Mammary epithelial cell (primary cell): ENCODE measurements at regions of chr7 and their contacts with region 1.

Region 1: GRCh38 chr7:133853706-133854276 is 273.3 kb upstream of the LRGUK start:
- DNase-seq: peak; percentile 98
- H3K4me3 ChIP-seq: no peak overlapping the region
- H3K27ac ChIP-seq: peak overlapping the region; percentile 96
- H3K4me1 ChIP-seq: peaks cover 45% of the 10 kb centered on the region
- H3K27me3 ChIP-seq: no peaks in the 10 kb centered on the region
- CTCF ChIP-seq: peak; percentile 66 to 70

Region 2: GRCh38 chr7:133051066-133051465 is 802.7 kb before region 1 on chr7:
- CTCF ChIA-PET with region 1: no interaction called
- dilution Hi-C with region 1: no loop called
- in situ Hi-C with region 1: no loop called
- intact Hi-C with region 1: loop called (anchors 10 kb)
- DNase-seq: no peak
- H3K4me3 ChIP-seq: no peak overlapping the region
- H3K27ac ChIP-seq: no peak overlapping the region
- H3K4me1 ChIP-seq: peaks cover 35% of the 10 kb centered on the region
- H3K27me3 ChIP-seq: no peaks in the 10 kb centered on the region
- CTCF ChIP-seq: peak in 1 of 2 donors; percentile 28

Region 3: GRCh38 chr7:133434055-133434865 is 419.5 kb before region 1 on chr7:
- CTCF ChIA-PET with region 1: interaction called, 5 read pairs
- dilution Hi-C with region 1: no loop called
- in situ Hi-C with region 1: no loop called
- intact Hi-C with region 1: loop called (anchors 1 kb)
- DNase-seq: peak; percentile 8
- H3K4me3 ChIP-seq: no peak overlapping the region
- H3K27ac ChIP-seq: no peak overlapping the region
- H3K4me1 ChIP-seq: peaks cover 27% of the 10 kb centered on the region
- H3K27me3 ChIP-seq: no peaks in the 10 kb centered on the region
- CTCF ChIP-seq: peak; percentile 35 to 55

Region 4: DNA sequence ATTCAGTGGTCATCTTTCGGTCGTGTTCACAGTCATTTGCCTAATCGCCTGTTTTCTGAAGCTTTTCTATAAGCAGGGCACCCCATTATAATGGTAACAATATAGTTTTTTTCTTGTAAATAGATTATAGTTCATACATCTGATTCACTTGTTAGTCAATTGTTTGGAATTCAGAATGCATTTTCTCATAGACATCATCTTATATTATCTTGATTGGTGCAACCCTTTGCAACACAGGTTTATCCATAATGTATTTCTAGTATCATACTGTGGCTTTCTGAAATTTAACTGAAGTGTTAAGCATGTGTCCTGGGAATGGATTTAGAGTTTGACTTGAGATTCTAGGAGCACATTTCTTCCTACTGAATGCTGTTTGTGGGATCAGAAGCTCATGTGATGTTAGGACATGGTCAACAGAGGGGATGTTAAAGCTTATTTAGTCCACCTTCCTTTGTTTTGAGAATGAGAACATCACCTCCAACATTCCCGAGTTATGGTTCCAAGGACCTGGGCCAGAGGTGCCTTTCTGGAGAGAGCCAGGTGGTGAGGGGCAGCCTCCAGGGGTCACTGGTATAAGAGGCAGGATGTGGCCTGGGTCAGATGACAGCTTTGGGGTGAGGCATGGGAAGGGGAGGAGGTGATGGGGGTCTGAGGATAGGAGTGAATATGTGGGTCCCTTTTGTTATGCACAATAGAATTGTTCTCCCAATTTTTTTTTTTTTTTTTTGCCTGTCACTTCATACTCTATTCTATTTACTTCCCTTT is 185.3 kb before region 1 on chr7:
- CTCF ChIA-PET with region 1: no interaction called
- dilution Hi-C with region 1: no loop called
- in situ Hi-C with region 1: no loop called
- intact Hi-C with region 1: no loop called
- DNase-seq: no peak
- H3K4me3 ChIP-seq: no peak overlapping the region
- H3K27ac ChIP-seq: no peak overlapping the region
- H3K4me1 ChIP-seq: no peaks in the 10 kb centered on the region
- H3K27me3 ChIP-seq: no peaks in the 10 kb centered on the region
- CTCF ChIP-seq: no peak

Region 5: GRCh38 chr7:133703547-133703946 is 150.2 kb before region 1 on chr7:
- CTCF ChIA-PET with region 1: no interaction called
- dilution Hi-C with region 1: no loop called
- in situ Hi-C with region 1: no loop called
- intact Hi-C with region 1: loop called (anchors 1 kb)
- DNase-seq: peak; percentile 54
- H3K4me3 ChIP-seq: no peak overlapping the region
- H3K27ac ChIP-seq: no peak overlapping the region
- H3K4me1 ChIP-seq: peaks cover 25% of the 10 kb centered on the region
- H3K27me3 ChIP-seq: no peaks in the 10 kb centered on the region
- CTCF ChIP-seq: no peak

Region 6: GRCh38 chr7:133912916-133913697 is 59.3 kb after region 1 on chr7:
- CTCF ChIA-PET with region 1: no interaction called
- dilution Hi-C with region 1: no loop called
- in situ Hi-C with region 1: no loop called
- intact Hi-C with region 1: loop called (anchors 1 kb)
- DNase-seq: peak; percentile 95
- H3K4me3 ChIP-seq: no peak overlapping the region
- H3K27ac ChIP-seq: peak overlapping the region; percentile 56
- H3K4me1 ChIP-seq: peaks cover 32% of the 10 kb centered on the region
- H3K27me3 ChIP-seq: no peaks in the 10 kb centered on the region
- CTCF ChIP-seq: no peak

Region 7: DNA sequence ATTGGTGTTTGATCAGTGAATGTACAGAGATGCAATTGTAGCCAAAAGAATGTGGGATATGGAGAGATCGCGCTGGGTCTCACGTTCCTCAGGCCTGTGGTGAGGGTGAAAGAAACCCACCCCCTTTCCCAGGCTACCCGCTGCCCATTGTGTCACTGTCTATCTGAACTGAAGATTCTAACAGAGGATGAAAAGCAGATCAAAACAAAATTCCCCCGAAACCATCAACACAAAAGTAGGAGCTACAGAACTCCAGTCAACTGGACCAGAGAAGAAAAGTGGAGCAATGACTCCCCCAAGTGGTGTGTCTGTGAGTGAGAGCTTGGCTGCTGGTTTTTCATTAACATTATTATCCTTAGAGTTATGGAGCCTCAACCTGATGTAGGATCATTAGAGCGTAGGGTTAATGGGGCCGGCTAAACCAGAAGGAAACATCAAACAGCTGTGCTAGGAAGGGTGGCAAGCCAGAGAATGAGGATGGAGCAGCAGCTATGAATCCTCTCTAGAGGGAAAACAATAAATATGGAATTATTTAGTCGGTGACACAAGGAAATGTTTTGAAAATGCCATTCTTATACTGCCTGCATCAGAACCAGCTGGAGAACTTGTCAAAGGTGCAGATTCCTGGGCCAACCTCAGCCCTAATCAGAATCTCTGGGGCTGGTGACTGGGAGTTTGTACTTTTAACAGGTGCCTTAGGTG is 566.8 kb after region 1 on chr7:
- CTCF ChIA-PET with region 1: no interaction called
- dilution Hi-C with region 1: no loop called
- in situ Hi-C with region 1: no loop called
- intact Hi-C with region 1: loop called (anchors 2 kb)
- DNase-seq: peak; percentile 55
- H3K4me3 ChIP-seq: no peak overlapping the region
- H3K27ac ChIP-seq: no peak overlapping the region
- H3K4me1 ChIP-seq: peaks cover 6% of the 10 kb centered on the region
- H3K27me3 ChIP-seq: no peaks in the 10 kb centered on the region
- CTCF ChIP-seq: peak; percentile 76 to 89